Colonic mucosa (tissue), 4 donors: ENCODE measurements at regions of chr19 and their contacts with region 1.

Region 1: GRCh38 chr19:12884926-12885748 is 1.9 kb downstream of the KLF1 start:
- DNase-seq: peak; percentile 97
- H3K4me3 ChIP-seq: peak overlapping the region; percentile 50
- H3K27ac ChIP-seq: peak overlapping the region; percentile 19
- H3K4me1 ChIP-seq: no peaks in the 10 kb centered on the region
- H3K27me3 ChIP-seq: no peaks in the 10 kb centered on the region
- CTCF ChIP-seq: peak; percentile 71

Region 2: DNA sequence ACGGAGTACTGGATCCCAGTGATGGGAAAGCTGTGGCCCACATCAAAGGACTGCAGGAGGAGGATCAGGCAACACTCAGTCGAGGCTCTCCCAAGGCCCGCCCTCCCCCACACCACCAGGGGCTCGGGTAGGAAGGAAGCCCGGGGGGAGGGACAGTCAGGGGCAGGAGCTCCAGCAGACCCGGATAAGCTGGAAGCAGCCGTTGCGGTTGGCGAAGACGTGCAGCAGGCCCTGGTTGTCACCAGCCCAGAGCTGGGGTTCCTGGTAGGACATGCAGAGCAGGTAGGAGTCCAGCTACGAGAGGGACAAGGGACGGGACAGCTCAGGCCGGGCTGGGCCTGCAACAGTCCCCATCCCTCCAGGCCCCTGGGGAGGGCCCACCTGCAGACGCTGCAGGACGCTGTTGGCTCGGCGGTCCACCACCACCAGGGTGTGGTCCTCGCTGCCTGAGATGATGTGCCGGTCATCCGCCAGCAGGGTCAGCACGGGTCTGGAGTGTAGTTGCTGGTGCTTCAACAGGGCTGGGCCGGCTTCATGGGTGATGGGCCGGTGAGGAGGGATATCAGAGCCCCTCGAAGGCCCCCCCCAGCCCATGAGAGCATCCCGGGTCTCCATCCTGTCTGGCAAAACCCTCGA is 195.4 kb before region 1 on chr19:
- intact Hi-C with region 1: no loop called
- DNase-seq: no peak
- H3K4me3 ChIP-seq: no peak overlapping the region
- H3K27ac ChIP-seq: no peak overlapping the region
- H3K4me1 ChIP-seq: no peaks in the 10 kb centered on the region
- H3K27me3 ChIP-seq: no peaks in the 10 kb centered on the region
- CTCF ChIP-seq: no peak

Region 3: GRCh38 chr19:12965017-12965811 is 80.1 kb after region 1 on chr19:
- intact Hi-C with region 1: loop called (anchors 5 kb)
- DNase-seq: peak; percentile 91
- H3K4me3 ChIP-seq: peak overlapping the region; percentile 42
- H3K27ac ChIP-seq: peak overlapping the region; percentile 51
- H3K4me1 ChIP-seq: peaks cover 3% of the 10 kb centered on the region
- H3K27me3 ChIP-seq: no peaks in the 10 kb centered on the region
- CTCF ChIP-seq: peak; percentile 96